ENCODE measurements at regions of chr20 and their contacts with region 1.

Region 1: GRCh38 chr20:23156170-23156841 is 70.2 kb upstream of the CD93 start:
- DNase-seq: peak; percentile 97 to 99 (median 97)
- H3K4me3 ChIP-seq: no peak overlapping the region
- H3K4me3 Mint-ChIP-seq: peak overlapping the region in 1 of 2 donors; percentile 54
- H3K27ac ChIP-seq: peak overlapping the region; percentile 83 to 100
- H3K27ac Mint-ChIP-seq: peak overlapping the region; percentile 96 to 100 (median 100)
- H3K4me1 ChIP-seq: peaks cover 96 to 100% of the 10 kb centered on the region in 2 donors
- H3K4me1 Mint-ChIP-seq: peaks cover 100% of the 10 kb centered on the region
- H3K27me3 ChIP-seq: no peaks in the 10 kb centered on the region
- H3K27me3 Mint-ChIP-seq: peaks cover 0 to 3% (median 0%) of the 10 kb centered on the region in 3 donors
- CTCF ChIP-seq: no peak

Region 2: DNA sequence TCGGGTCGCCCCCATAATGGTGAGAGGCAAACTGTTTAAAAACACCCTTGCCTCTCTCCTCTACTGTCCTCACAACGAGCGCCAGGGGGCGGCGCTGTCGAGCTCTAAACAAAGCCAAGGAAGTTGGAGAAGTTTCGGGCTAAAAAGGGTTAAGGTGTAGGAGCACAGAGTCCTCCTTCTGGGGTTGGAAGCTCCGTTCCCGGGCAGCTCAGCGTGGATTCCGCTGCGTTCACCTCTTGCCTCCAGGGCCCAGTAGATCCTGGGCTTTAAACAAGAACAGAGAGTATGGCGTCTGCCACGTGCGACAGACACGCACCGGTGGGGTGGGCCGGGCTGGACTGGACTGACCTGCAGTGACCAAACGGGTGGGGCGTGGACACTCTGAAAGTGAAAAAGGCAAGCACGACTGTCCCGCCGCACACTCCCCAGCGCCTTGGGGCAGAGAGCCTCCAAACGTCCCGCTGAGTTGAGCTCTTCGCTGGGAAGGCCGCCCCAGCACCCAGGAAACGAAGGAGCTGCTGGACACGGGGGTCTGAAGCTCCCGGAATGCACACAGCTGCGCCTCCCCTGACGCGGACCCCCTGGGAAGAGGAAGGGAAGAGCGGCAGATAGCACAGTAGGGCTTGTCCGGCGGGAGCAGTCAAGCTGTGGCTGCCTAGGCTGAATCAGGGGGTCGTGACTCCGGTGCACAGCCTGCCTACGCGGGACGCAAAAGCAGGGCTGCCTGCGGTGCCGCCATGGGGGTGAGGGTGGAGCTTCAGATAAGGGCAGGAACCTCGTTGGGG is 105.3 kb before region 1 on chr20:
- intact Hi-C with region 1: loop called in 1 of 2 experiments (anchors 5 kb)
- DNase-seq: peak; percentile 72 to 86 (median 78)
- H3K4me3 ChIP-seq: peak overlapping the region; percentile 43 to 79 (median 50)
- H3K4me3 Mint-ChIP-seq: peak overlapping the region; percentile 88 to 93
- H3K27ac ChIP-seq: peak overlapping the region; percentile 45 to 91
- H3K27ac Mint-ChIP-seq: peak overlapping the region; percentile 88 to 97 (median 92)
- H3K4me1 ChIP-seq: peaks cover 43 to 57% of the 10 kb centered on the region in 2 donors
- H3K4me1 Mint-ChIP-seq: peaks cover 42% of the 10 kb centered on the region
- H3K27me3 ChIP-seq: peaks cover 0 to 11% of the 10 kb centered on the region in 2 donors
- H3K27me3 Mint-ChIP-seq: peaks cover 9 to 22% (median 20%) of the 10 kb centered on the region in 3 donors
- CTCF ChIP-seq: peak; percentile 97

Region 3: GRCh38 chr20:23116311-23117089 is 39.8 kb before region 1 on chr20:
- intact Hi-C with region 1: loop called in 1 of 2 experiments (anchors 5 kb)
- DNase-seq: peak; percentile 85 to 95 (median 86)
- H3K4me3 ChIP-seq: peak overlapping the region in 1 of 3 experiments; percentile 0
- H3K4me3 Mint-ChIP-seq: peak overlapping the region; percentile 38 to 44
- H3K27ac ChIP-seq: peak overlapping the region; percentile 96 to 100
- H3K27ac Mint-ChIP-seq: peak overlapping the region; percentile 96 to 100 (median 98)
- H3K4me1 ChIP-seq: peaks cover 87 to 91% of the 10 kb centered on the region in 2 donors
- H3K4me1 Mint-ChIP-seq: peaks cover 88% of the 10 kb centered on the region
- H3K27me3 ChIP-seq: no peaks in the 10 kb centered on the region
- H3K27me3 Mint-ChIP-seq: no peaks in the 10 kb centered on the region
- CTCF ChIP-seq: no peak

Region 4: GRCh38 chr20:23193801-23194382 is 37.6 kb after region 1 on chr20:
- intact Hi-C with region 1: loop called in 1 of 2 experiments (anchors 5 kb)
- DNase-seq: peak; percentile 78 to 84 (median 82)
- H3K4me3 ChIP-seq: no peak overlapping the region
- H3K4me3 Mint-ChIP-seq: no peak overlapping the region
- H3K27ac ChIP-seq: peak overlapping the region in 1 of 2 donors; percentile 60
- H3K27ac Mint-ChIP-seq: peak overlapping the region; percentile 72 to 88 (median 86)
- H3K4me1 ChIP-seq: peaks cover 40 to 52% of the 10 kb centered on the region in 2 donors
- H3K4me1 Mint-ChIP-seq: peaks cover 46% of the 10 kb centered on the region
- H3K27me3 ChIP-seq: no peaks in the 10 kb centered on the region
- H3K27me3 Mint-ChIP-seq: peaks cover 0 to 3% (median 0%) of the 10 kb centered on the region in 3 donors
- CTCF ChIP-seq: no peak

Region 5: GRCh38 chr20:23205611-23206041 is 49.3 kb after region 1 on chr20:
- intact Hi-C with region 1: no loop called
- DNase-seq: no peak
- H3K4me3 ChIP-seq: no peak overlapping the region
- H3K4me3 Mint-ChIP-seq: peak overlapping the region in 1 of 2 donors; percentile 27
- H3K27ac ChIP-seq: no peak overlapping the region
- H3K27ac Mint-ChIP-seq: peak overlapping the region in 2 of 7 donors; percentile 17 to 38
- H3K4me1 ChIP-seq: peaks cover 11 to 18% of the 10 kb centered on the region in 2 donors
- H3K4me1 Mint-ChIP-seq: peaks cover 35% of the 10 kb centered on the region
- H3K27me3 ChIP-seq: no peaks in the 10 kb centered on the region
- H3K27me3 Mint-ChIP-seq: peaks cover 2 to 5% (median 3%) of the 10 kb centered on the region in 3 donors
- CTCF ChIP-seq: no peak

Region 6: DNA sequence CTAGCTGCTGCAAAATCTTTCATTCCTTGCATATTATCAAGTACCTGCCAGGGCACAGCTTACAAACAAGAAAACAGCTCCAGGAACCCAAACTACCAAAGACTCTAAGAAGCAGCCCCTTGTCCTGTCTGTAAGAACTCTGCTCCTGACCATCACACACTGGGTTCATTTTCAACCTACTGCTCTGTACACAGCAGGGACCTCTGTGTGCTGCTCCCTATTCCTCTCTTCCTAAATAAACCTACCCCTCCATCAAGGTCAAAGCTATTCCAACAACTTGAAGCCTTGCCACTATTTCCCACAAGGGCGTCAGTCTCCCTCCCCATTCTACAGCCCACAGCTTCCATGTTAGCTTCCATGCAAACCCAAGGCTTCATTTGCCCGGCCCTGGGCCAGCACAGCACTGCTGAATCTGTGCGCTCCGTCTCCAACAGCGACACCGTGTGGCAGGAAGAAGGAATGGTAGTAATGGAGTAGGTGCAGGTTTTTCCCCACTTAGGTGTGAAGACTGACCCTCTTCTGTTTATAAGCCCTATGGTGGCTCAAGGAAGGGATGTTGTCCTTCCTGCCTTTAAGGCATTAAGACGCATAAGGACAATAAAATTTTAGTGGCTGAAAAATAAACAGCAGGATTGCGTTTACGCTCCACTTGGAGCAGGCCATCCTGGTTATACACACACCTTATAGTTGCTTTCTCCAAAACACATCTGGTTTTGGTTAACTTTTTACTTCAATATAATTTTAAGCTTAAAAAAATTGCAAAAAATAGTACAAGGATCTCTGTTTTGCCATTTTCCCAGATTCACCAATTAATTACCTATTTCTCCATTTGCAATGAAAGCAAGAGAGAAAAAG is 79.1 kb after region 1 on chr20:
- intact Hi-C with region 1: loop called in 1 of 2 experiments (anchors 5 kb)
- DNase-seq: peak; percentile 66 to 78 (median 73)
- H3K4me3 ChIP-seq: no peak overlapping the region
- H3K4me3 Mint-ChIP-seq: no peak overlapping the region
- H3K27ac ChIP-seq: peak overlapping the region in 1 of 2 donors; percentile 18
- H3K27ac Mint-ChIP-seq: peak overlapping the region in 3 of 7 donors; percentile 53 to 92 (median 86)
- H3K4me1 ChIP-seq: peaks cover 22 to 29% of the 10 kb centered on the region in 2 donors
- H3K4me1 Mint-ChIP-seq: peaks cover 33% of the 10 kb centered on the region
- H3K27me3 ChIP-seq: no peaks in the 10 kb centered on the region
- H3K27me3 Mint-ChIP-seq: peaks cover 2 to 9% (median 7%) of the 10 kb centered on the region in 3 donors
- CTCF ChIP-seq: peak; percentile 94

Region 7: DNA sequence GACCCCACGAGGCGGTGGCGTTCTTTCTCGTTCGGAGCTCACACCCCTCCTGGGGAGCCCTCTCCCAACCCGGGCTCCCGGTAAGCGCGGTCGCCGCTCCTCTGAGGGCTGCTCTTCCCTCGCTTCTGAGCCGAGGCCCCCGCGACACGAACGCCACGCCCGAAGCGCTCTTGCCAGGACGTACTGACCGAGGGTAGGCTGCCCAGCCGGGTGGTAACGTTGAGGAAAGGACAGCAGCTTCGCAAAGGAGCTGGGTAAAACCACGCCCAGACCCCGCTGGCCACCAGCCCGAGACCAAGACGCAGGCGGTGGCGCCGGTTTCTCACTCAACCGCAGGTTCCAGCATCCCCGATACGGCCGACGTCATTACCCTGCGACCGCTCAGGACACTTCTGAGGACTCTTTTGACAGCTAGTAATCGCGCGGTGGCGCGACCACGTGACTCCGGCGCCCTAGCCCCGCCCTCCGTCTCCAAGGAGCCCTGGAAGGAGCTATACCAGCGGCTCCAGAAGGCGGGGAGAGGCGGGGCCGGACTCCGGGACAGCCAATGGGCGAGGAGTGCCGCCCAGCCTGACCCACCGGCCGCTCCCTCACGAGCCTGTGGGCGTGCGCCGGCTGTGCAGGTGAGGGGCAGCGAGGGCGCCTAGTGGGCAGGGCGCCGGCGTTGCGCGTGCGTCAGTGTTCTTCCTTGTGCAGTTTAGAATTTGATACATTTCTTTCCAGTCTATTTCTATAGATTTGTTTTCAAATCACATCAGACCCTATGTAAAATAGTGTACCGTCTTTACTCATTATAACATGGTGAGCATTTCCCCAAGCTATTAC is 201.7 kb after region 1 on chr20:
- intact Hi-C with region 1: loop called in 1 of 2 experiments (anchors 10 kb)
- DNase-seq: peak; percentile 100
- H3K4me3 ChIP-seq: peak overlapping the region; percentile 45 to 84 (median 70)
- H3K4me3 Mint-ChIP-seq: peak overlapping the region; percentile 76 to 87
- H3K27ac ChIP-seq: peak overlapping the region; percentile 92 to 95
- H3K27ac Mint-ChIP-seq: peak overlapping the region; percentile 93 to 98 (median 94)
- H3K4me1 ChIP-seq: peaks cover 29 to 38% of the 10 kb centered on the region in 2 donors
- H3K4me1 Mint-ChIP-seq: peaks cover 33% of the 10 kb centered on the region
- H3K27me3 ChIP-seq: no peaks in the 10 kb centered on the region
- H3K27me3 Mint-ChIP-seq: peaks cover 0 to 3% (median 0%) of the 10 kb centered on the region in 3 donors
- CTCF ChIP-seq: no peak

Measured in CD14-positive monocyte (primary cell).